PC-9 (cell line): ENCODE measurements at regions of chr14 and their contacts with region 1.

Region 1: GRCh38 chr14:77067632-77068514 is 30.2 kb upstream of the CIPC start:
- DNase-seq: peak; percentile 74 to 93
- H3K4me3 ChIP-seq: no peak overlapping the region
- H3K27ac ChIP-seq: no peak overlapping the region
- H3K4me1 ChIP-seq: peaks cover 54% of the 10 kb centered on the region
- H3K27me3 ChIP-seq: no peaks in the 10 kb centered on the region
- CTCF ChIP-seq: peak; percentile 100

Region 2: DNA sequence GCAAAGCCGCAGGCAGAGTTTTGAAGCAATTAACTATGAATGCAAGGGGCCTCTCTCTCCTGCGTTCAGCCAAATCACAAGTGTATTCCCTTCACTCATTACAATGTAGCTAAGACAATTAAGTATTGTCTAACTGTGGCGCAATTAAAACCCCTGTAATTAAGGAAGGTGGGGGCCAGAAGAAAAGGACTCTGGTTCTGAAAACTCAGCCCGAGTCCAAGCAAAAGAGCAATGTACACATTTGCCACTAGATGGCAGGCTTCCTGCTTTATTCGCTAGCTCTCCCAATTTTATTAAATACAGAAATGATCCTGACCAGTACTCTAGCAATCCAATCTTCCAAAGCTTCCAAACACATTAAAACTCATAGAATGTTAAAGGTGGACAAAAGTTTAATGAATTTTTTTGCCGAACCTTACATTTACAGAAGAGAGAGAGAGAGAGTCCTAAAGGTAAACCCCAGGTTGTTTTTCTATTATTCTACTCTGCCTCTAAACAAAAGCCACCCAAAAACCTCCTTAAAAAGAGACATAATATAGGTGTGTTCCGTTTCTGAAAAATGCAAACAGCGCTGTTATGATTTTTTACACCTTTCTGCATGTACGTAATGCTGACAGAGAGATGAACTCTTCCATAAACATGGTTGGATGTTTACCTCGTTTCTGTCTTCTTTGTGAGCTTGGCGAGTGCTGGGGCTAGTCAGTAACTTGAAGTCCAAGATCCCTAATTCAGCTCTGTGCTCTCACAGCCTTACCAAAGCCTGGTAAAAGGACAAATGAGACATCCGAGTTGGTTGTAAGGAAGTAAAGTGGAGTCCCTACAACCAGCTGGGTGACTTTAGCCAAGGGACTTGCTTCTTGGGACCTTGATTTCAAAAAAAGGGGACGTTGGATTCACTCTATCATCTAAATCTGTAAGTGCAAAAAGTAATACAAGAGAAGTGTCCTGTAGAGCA is 357.5 kb before region 1 on chr14:
- CTCF ChIA-PET with region 1: no interaction called
- POLR2A ChIA-PET with region 1: no interaction called
- intact Hi-C with region 1: loop called (anchors 1 kb)
- DNase-seq: peak in 1 of 2 experiments; percentile 35
- H3K4me3 ChIP-seq: no peak overlapping the region
- H3K27ac ChIP-seq: no peak overlapping the region
- H3K4me1 ChIP-seq: no peaks in the 10 kb centered on the region
- H3K27me3 ChIP-seq: peaks cover 93% of the 10 kb centered on the region
- CTCF ChIP-seq: peak; percentile 96

Region 3: GRCh38 chr14:76924371-76925096 is 143.3 kb before region 1 on chr14:
- CTCF ChIA-PET with region 1: interaction called, 4 read pairs
- POLR2A ChIA-PET with region 1: interaction called, 16 read pairs
- intact Hi-C with region 1: no loop called
- DNase-seq: no peak
- H3K4me3 ChIP-seq: no peak overlapping the region
- H3K27ac ChIP-seq: no peak overlapping the region
- H3K4me1 ChIP-seq: peaks cover 24% of the 10 kb centered on the region
- H3K27me3 ChIP-seq: no peaks in the 10 kb centered on the region
- CTCF ChIP-seq: no peak

Region 4: GRCh38 chr14:76962303-76962660 is 105.6 kb before region 1 on chr14:
- CTCF ChIA-PET with region 1: interaction called, 13 read pairs
- POLR2A ChIA-PET with region 1: interaction called, 4 read pairs
- intact Hi-C with region 1: loop called (anchors 1 kb)
- DNase-seq: no peak
- H3K4me3 ChIP-seq: peak overlapping the region; percentile 48
- H3K27ac ChIP-seq: peak overlapping the region; percentile 90
- H3K4me1 ChIP-seq: peaks cover 65% of the 10 kb centered on the region
- H3K27me3 ChIP-seq: no peaks in the 10 kb centered on the region
- CTCF ChIP-seq: no peak

Region 5: GRCh38 chr14:77023001-77023996 is 44.6 kb before region 1 on chr14:
- CTCF ChIA-PET with region 1: interaction called, 16 read pairs
- POLR2A ChIA-PET with region 1: interaction called, 4 read pairs
- intact Hi-C with region 1: loop called (anchors 1 kb)
- DNase-seq: peak in 1 of 2 experiments; percentile 61
- H3K4me3 ChIP-seq: peak overlapping the region; percentile 64
- H3K27ac ChIP-seq: peak overlapping the region; percentile 17
- H3K4me1 ChIP-seq: peaks cover 40% of the 10 kb centered on the region
- H3K27me3 ChIP-seq: no peaks in the 10 kb centered on the region
- CTCF ChIP-seq: no peak

Region 6: GRCh38 chr14:77151918-77152588 is 84.2 kb after region 1 on chr14:
- CTCF ChIA-PET with region 1: interaction called, 14 read pairs
- POLR2A ChIA-PET with region 1: no interaction called
- intact Hi-C with region 1: no loop called
- DNase-seq: peak; percentile 31 to 66
- H3K4me3 ChIP-seq: no peak overlapping the region
- H3K27ac ChIP-seq: no peak overlapping the region
- H3K4me1 ChIP-seq: no peaks in the 10 kb centered on the region
- H3K27me3 ChIP-seq: peaks cover 52% of the 10 kb centered on the region
- CTCF ChIP-seq: peak; percentile 70

Region 7: GRCh38 chr14:77314043-77314442 is 246.2 kb after region 1 on chr14:
- CTCF ChIA-PET with region 1: no interaction called
- POLR2A ChIA-PET with region 1: no interaction called
- intact Hi-C with region 1: no loop called
- DNase-seq: peak in 1 of 2 experiments; percentile 83
- H3K4me3 ChIP-seq: no peak overlapping the region
- H3K27ac ChIP-seq: no peak overlapping the region
- H3K4me1 ChIP-seq: peaks cover 1% of the 10 kb centered on the region; the same call in 1 of the 2 replicates
- H3K27me3 ChIP-seq: no peaks in the 10 kb centered on the region
- CTCF ChIP-seq: 0 out of 2 replicates have a peak, but pooled peaks have one; percentile 9